Naive thymus-derived CD4-positive, alpha-beta T cell (primary cell): ENCODE measurements at regions of chr6 and their contacts with region 1.

Region 1: GRCh38 chr6:42808492-42809483 is 26.9 kb downstream of the BICRAL start:
- DNase-seq: no peak
- ATAC-seq: no peak
- H3K4me3 ChIP-seq: no peak overlapping the region
- H3K4me3 Mint-ChIP-seq: no peak overlapping the region
- H3K27ac ChIP-seq: no peak overlapping the region
- H3K27ac Mint-ChIP-seq: peak overlapping the region in 3 of 9 donors; percentile 8 to 47 (median 42)
- H3K4me1 ChIP-seq: no peaks in the 10 kb centered on the region
- H3K4me1 Mint-ChIP-seq: peaks cover 4 to 26% (median 15%) of the 10 kb centered on the region in 7 donors
- H3K27me3 ChIP-seq: no peaks in the 10 kb centered on the region
- H3K27me3 Mint-ChIP-seq: no peaks in the 10 kb centered on the region

Region 2: GRCh38 chr6:42796171-42796570 is 12.6 kb before region 1 on chr6:
- CTCF ChIA-PET with region 1: interaction called, 6 read pairs
- POLR2A ChIA-PET with region 1: interaction called, 5 read pairs
- intact Hi-C with region 1: loop called in 1 of 2 experiments (anchors 2 kb)
- DNase-seq: no peak
- ATAC-seq: no peak
- H3K4me3 ChIP-seq: no peak overlapping the region
- H3K4me3 Mint-ChIP-seq: peak overlapping the region in 1 of 10 donors; percentile 0
- H3K27ac ChIP-seq: no peak overlapping the region
- H3K27ac Mint-ChIP-seq: peak overlapping the region in 7 of 9 donors; percentile 6 to 65 (median 26)
- H3K4me1 ChIP-seq: peaks cover 0 to 6% of the 10 kb centered on the region in 2 donors
- H3K4me1 Mint-ChIP-seq: peaks cover 10 to 29% (median 25%) of the 10 kb centered on the region in 7 donors
- H3K27me3 ChIP-seq: no peaks in the 10 kb centered on the region
- H3K27me3 Mint-ChIP-seq: no peaks in the 10 kb centered on the region